ENCODE measurements at regions of chr13 and their contacts with region 1.

Region 1: DNA sequence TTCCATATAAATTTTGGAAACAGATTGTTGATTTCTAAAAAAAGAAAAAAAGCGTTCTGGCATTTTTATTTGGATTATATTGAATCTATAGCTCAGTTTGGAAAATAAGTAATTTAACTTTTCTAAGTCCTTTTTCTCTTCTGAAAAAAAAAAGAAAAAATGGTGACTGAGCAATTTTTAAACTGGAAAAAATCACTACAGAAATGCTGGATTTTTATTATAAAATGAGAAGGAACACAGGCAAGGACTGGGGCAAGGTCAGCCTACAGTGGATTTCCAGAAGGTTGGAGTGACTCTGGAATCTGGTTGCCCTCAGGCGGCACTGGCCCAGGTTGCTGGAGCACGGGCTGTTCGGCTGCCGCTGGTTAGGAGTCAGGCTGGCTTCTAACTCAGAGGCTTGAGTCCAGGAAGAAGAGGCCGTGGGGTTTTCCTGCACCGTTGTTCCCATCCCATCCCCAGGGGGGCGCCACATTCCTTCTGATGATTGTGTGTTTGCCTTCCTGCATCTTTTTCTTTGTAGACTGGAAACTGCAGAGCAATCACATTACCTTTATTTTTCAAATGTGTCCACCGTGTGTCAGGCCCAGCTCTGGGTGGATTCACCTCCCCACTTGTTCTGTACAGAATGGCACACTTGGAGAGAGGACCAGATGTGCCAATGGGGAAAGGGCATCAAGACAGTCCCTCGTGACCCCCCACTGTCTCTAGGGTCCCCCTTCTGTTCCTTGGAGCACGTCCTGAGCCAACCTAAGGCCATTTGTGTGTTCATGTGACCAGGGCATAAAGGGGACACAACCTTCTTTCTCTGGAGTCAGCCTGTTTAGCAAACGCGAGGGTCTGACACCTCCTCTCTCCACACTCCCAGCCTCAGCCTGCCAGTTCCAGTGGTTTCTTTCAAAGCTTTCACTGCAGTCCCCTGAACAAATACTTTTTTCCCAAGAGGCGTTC is 44.5 kb upstream of the GTF3A start:
- DNase-seq: peak; percentile 82
- H3K4me3 Mint-ChIP-seq: no peak overlapping the region
- H3K27ac Mint-ChIP-seq: no peak overlapping the region
- H3K4me1 Mint-ChIP-seq: no peaks in the 10 kb centered on the region
- H3K27me3 Mint-ChIP-seq: peaks cover 3% of the 10 kb centered on the region

Region 2: GRCh38 chr13:27481766-27482165 is 101.8 kb after region 1 on chr13:
- CTCF ChIA-PET with region 1: no interaction called
- intact Hi-C with region 1: loop called (anchors 5 kb)
- DNase-seq: peak; percentile 63
- H3K4me3 Mint-ChIP-seq: no peak overlapping the region
- H3K27ac Mint-ChIP-seq: no peak overlapping the region
- H3K4me1 Mint-ChIP-seq: peaks cover 5% of the 10 kb centered on the region
- H3K27me3 Mint-ChIP-seq: no peaks in the 10 kb centered on the region

Region 3: DNA sequence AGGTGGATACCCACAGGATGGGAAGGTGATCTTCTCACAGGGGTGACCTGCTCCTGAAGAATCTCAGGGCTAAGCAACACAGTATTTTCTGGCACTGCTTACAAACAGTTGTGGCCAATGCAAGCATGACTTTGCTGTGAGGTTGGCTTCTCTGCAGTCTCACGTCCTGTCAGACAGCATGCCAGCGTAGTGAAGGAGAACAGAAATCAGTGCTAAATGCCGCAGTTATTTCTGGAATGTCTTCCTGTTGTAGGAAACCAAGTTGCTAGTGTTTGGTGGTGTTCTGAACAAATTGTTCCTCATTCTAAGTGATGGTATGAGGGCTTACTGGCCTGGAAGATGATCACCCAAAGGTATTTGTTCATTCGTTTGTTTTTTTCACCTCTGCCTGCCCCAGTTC is 1760.3 kb after region 1 on chr13:
- CTCF ChIA-PET with region 1: no interaction called
- intact Hi-C with region 1: no loop called
- DNase-seq: no peak
- H3K4me3 Mint-ChIP-seq: no peak overlapping the region
- H3K27ac Mint-ChIP-seq: no peak overlapping the region
- H3K4me1 Mint-ChIP-seq: no peaks in the 10 kb centered on the region
- H3K27me3 Mint-ChIP-seq: peaks cover 4% of the 10 kb centered on the region